RWPE1 (cell line): ENCODE measurements at regions of chr12 and their contacts with region 1.

Region 1: GRCh38 chr12:3214572-3215364 is 137.6 kb downstream of the TSPAN9 start:
- DNase-seq: no peak
- H3K27ac ChIP-seq: no peak overlapping the region
- CTCF ChIP-seq: no peak

Region 2: GRCh38 chr12:3034067-3034750 is 180.6 kb before region 1 on chr12:
- CTCF ChIA-PET with region 1: no interaction called
- POLR2A ChIA-PET with region 1: no interaction called
- DNase-seq: peak; percentile 66
- H3K27ac ChIP-seq: no peak overlapping the region
- CTCF ChIP-seq: peak; percentile 40

Region 3: GRCh38 chr12:3202734-3203446 is 11.9 kb before region 1 on chr12:
- CTCF ChIA-PET with region 1: interaction called, 11 read pairs
- POLR2A ChIA-PET with region 1: no interaction called
- DNase-seq: peak; percentile 70
- H3K27ac ChIP-seq: no peak overlapping the region
- CTCF ChIP-seq: peak; percentile 76